Endothelial cell of umbilical vein (primary cell): ENCODE measurements at regions of chr3 and their contacts with region 1.

Region 1: DNA sequence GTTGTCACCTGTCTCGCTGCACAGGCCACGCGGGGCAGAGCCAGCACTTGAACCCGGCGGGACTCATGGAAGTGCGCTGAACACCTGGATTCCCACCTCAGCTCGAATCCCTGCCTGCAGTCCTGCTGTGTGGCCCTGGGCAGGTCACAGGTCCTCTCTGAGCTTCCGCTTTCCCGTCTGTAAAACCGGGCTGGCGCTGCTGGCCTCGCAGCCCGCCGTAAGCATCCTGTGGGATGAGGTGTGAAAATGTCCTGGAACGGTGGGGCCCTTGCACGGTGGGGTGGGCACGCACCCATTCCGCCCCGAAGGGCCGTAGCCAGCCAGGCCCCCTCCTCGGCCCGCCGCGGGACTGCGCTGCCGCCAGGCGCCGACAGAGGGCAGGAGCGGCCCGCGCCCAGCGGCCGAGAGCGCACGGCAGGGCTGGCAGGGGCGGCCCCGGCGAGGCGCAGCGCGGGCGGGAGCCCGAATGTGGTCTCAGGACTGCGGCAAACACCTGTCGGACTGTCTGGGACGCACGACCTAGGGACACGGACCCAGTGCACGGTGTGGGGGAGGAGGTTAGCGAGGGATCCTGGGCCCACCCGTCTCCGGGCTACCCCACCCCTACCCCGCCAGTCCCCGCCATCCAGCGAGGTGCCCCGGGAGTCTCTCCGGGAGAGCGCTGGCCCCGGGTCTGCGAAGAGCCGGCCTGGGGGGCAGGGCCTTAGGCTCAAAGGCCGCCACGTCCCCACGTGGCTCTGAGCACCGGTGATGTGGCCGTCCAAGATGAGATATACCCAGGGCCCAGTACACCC is 40.4 kb downstream of the DNAJB8 start:
- DNase-seq: peak; percentile 41
- H3K4me3 ChIP-seq: no peak overlapping the region
- H3K27ac ChIP-seq: no peak overlapping the region
- H3K4me1 ChIP-seq: peaks cover 3% of the 10 kb centered on the region
- H3K27me3 ChIP-seq: peaks cover 0 to under 1% of the 10 kb centered on the region in 2 experiments
- CTCF ChIP-seq: peak; percentile 75 to 96
- POLR2A ChIP-seq: no peak

Region 2: DNA sequence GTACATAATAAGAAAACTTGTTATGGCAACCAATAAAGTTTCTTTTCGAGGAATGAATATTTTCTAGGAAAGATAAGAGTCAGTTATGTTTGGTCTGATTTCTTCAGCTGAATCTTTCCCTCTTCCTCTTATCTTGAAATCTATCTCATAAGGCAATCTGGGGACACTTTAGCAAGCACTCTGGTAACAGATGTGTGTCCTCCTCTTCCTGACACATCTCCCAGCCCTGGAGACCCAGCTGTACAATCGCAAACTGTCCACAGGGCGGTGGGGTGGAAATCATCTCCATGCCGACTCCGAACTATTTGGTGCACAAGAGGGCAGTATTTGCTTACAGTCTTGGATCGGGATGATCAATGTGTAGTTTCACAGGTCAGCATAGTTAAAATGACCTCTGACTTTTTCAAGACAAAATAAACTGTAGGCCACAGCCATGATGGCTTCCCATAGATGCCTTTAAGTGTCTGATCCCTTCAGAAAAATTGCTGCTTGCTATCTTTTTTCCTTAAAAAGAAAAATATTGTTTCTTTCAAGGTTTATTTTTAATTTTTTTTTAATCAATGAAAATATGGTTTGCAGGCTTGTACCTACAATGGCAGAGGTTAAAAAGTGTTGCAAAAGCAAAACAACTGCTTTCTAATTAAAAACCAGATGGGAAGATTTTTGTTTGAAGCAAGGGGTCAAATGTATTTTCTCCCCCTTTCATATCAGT is 255.4 kb before region 1 on chr3:
- CTCF ChIA-PET with region 1: interaction called, 6 read pairs
- POLR2A ChIA-PET with region 1: no interaction called
- dilution Hi-C with region 1: no loop called
- intact Hi-C with region 1: loop called (anchors 5 kb)
- DNase-seq: peak; percentile 78
- H3K4me3 ChIP-seq: no peak overlapping the region
- H3K27ac ChIP-seq: no peak overlapping the region
- H3K4me1 ChIP-seq: no peaks in the 10 kb centered on the region
- H3K27me3 ChIP-seq: no peaks in the 10 kb centered on the region
- CTCF ChIP-seq: peak; percentile 73 to 83
- POLR2A ChIP-seq: no peak

Region 3: GRCh38 chr3:128226795-128227395 is 199.4 kb before region 1 on chr3:
- CTCF ChIA-PET with region 1: interaction called, 3 read pairs
- POLR2A ChIA-PET with region 1: no interaction called
- dilution Hi-C with region 1: no loop called
- intact Hi-C with region 1: loop called (anchors 1 kb)
- DNase-seq: peak; percentile 59
- H3K4me3 ChIP-seq: no peak overlapping the region
- H3K27ac ChIP-seq: no peak overlapping the region
- H3K4me1 ChIP-seq: no peaks in the 10 kb centered on the region
- H3K27me3 ChIP-seq: no peaks in the 10 kb centered on the region
- CTCF ChIP-seq: peak; percentile 89 to 98
- POLR2A ChIP-seq: no peak

Region 4: GRCh38 chr3:128489855-128490649 is 63.7 kb after region 1 on chr3:
- CTCF ChIA-PET with region 1: interaction called, 48 read pairs
- POLR2A ChIA-PET with region 1: no interaction called
- dilution Hi-C with region 1: no loop called
- intact Hi-C with region 1: no loop called
- DNase-seq: peak; percentile 77
- H3K4me3 ChIP-seq: peak overlapping the region; percentile 77 to 95 (median 83)
- H3K27ac ChIP-seq: peak overlapping the region; percentile 97
- H3K4me1 ChIP-seq: peaks cover 15% of the 10 kb centered on the region
- H3K27me3 ChIP-seq: no peaks in the 10 kb centered on the region
- CTCF ChIP-seq: no peak
- POLR2A ChIP-seq: no peak

Region 5: GRCh38 chr3:128497387-128498126 is 71.2 kb after region 1 on chr3:
- CTCF ChIA-PET with region 1: interaction called, 52 read pairs
- POLR2A ChIA-PET with region 1: no interaction called
- dilution Hi-C with region 1: no loop called
- intact Hi-C with region 1: loop called (anchors 1 kb)
- DNase-seq: peak; percentile 52
- H3K4me3 ChIP-seq: peak overlapping the region in 2 of 3 experiments; percentile 16 to 33
- H3K27ac ChIP-seq: no peak overlapping the region
- H3K4me1 ChIP-seq: peaks cover 13% of the 10 kb centered on the region
- H3K27me3 ChIP-seq: no peaks in the 10 kb centered on the region
- CTCF ChIP-seq: peak; percentile 65 to 81
- POLR2A ChIP-seq: no peak

Region 6: DNA sequence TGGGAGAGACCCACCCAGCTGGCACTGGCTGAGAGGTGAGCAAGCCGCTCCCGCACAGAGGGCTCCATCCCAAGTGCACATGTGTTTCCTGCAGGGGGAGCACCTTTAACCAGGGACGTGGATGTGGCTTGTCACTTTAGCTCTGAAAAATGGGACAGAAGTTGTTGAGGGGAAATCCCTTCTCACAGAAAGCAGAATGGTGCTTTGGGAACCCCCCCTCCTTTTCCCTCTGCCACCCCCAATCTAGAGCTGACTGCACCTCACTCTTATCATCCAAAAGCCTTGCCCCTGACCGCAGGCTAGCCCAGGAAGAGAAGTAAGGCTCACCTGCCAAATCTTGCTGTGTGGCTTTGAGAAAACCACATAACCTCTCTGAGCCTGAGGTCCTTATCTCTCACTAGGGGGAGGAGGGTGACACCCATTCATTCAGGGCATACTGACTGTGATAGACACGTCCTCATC is 146.3 kb after region 1 on chr3:
- CTCF ChIA-PET with region 1: interaction called, 22 read pairs
- POLR2A ChIA-PET with region 1: no interaction called
- dilution Hi-C with region 1: loop called (anchors 25 kb)
- intact Hi-C with region 1: no loop called
- DNase-seq: no peak
- H3K4me3 ChIP-seq: no peak overlapping the region
- H3K27ac ChIP-seq: no peak overlapping the region
- H3K4me1 ChIP-seq: peaks cover 22% of the 10 kb centered on the region
- H3K27me3 ChIP-seq: peaks cover 16 to 50% of the 10 kb centered on the region in 2 experiments
- CTCF ChIP-seq: peak; percentile 23 to 24
- POLR2A ChIP-seq: no peak

Region 7: GRCh38 chr3:128814519-128815317 is 388.4 kb after region 1 on chr3:
- CTCF ChIA-PET with region 1: no interaction called
- POLR2A ChIA-PET with region 1: no interaction called
- dilution Hi-C with region 1: no loop called
- intact Hi-C with region 1: no loop called
- DNase-seq: no peak
- H3K4me3 ChIP-seq: no peak overlapping the region
- H3K27ac ChIP-seq: no peak overlapping the region
- H3K4me1 ChIP-seq: peaks cover 13% of the 10 kb centered on the region
- H3K27me3 ChIP-seq: no peaks in the 10 kb centered on the region
- CTCF ChIP-seq: no peak
- POLR2A ChIP-seq: no peak